Vagina (tissue), 2 donors: ENCODE measurements at regions of chr12 and their contacts with region 1.

Region 1: GRCh38 chr12:96230646-96231045 is 36.5 kb downstream of the ELK3 start:
- DNase-seq: no peak
- H3K4me3 ChIP-seq: no peak overlapping the region
- H3K27ac ChIP-seq: peak overlapping the region; percentile 23
- H3K4me1 ChIP-seq: peaks cover 31% of the 10 kb centered on the region
- H3K27me3 ChIP-seq: no peaks in the 10 kb centered on the region
- CTCF ChIP-seq: no peak
- POLR2A ChIP-seq: no peak

Region 2: GRCh38 chr12:95942524-95943329 is 287.9 kb before region 1 on chr12 and contains the start of gene CCDC38:
- intact Hi-C with region 1: no loop called
- DNase-seq: no peak
- H3K4me3 ChIP-seq: peak within 1 kb of the TSS; percentile 83 to 86
- H3K27ac ChIP-seq: peak within 1 kb of the TSS; percentile 84
- H3K4me1 ChIP-seq: peaks cover 6% of the 10 kb centered on the region
- H3K27me3 ChIP-seq: no peaks in the 10 kb centered on the region
- CTCF ChIP-seq: no peak
- POLR2A ChIP-seq: no peak
- total RNA-seq, gene CCDC38: not detected

Region 3: GRCh38 chr12:96255077-96255476 is 24.4 kb after region 1 on chr12:
- intact Hi-C with region 1: loop called (anchors 1 kb)
- DNase-seq: no peak
- H3K4me3 ChIP-seq: peak overlapping the region in 1 of 2 donors; percentile 1
- H3K27ac ChIP-seq: peak overlapping the region; percentile 53
- H3K4me1 ChIP-seq: peaks cover 34% of the 10 kb centered on the region
- H3K27me3 ChIP-seq: no peaks in the 10 kb centered on the region
- CTCF ChIP-seq: no peak
- POLR2A ChIP-seq: no peak